ENCODE measurements at regions of chr17 and their contacts with region 1.

Region 1: DNA sequence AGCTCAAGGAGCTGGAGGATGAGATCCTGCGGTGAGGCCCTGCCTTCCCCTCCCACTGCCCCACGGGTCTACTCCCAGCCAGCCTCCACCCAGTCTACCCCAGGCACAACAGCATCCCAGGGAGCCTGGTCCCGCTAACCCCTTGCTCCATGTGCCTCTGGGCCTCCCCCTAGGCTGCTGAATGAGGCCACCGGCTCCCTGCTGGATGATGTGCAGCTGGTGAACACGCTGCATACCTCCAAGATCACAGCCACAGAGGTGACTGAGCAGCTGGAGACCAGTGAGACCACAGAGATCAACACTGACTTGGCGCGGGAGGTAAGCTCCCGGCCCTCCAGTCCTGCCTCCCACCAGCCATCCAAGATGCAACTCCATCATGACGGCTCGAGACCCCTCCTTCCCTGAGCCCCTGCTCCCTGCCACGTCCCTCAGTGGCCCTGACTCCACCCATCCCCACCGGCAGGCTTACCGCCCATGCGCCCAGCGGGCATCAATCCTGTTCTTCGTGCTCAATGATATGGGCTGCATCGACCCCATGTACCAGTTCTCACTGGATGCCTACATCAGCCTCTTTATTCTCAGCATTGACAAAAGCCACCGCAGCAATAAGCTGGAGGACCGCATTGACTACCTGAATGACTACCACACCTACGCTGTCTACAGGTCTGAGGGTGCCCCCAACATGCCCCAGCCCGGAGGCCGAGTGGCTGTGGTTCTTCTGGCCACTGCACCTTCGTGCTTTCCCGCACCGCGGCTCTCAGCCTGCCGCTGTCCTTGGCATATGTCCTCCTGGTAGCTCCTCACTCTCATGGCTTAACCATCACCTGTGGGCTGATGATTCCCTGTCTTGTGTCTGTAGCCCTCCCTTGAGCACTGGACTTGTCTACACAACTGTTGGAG is 15.0 kb upstream of the KDM6B start:
- DNase-seq: no peak
- H3K4me3 ChIP-seq: no peak overlapping the region
- CTCF ChIP-seq: no peak
- POLR2A ChIP-seq: no peak

Region 2: GRCh38 chr17:7745748-7746470 is 73.1 kb before region 1 on chr17:
- intact Hi-C with region 1: loop called (anchors 10 kb)
- DNase-seq: peak in 1 of 2 donors; percentile 20
- H3K4me3 ChIP-seq: no peak overlapping the region
- CTCF ChIP-seq: no peak
- POLR2A ChIP-seq: no peak